ENCODE measurements at regions of chr13 and their contacts with region 1.

Region 1: GRCh38 chr13:30673669-30674521 is 56.2 kb downstream of the USPL1 start:
- DNase-seq: peak; percentile 42
- H3K4me3 ChIP-seq: peak overlapping the region; percentile 50 to 71 (median 62)
- H3K27ac ChIP-seq: peak overlapping the region; percentile 73 to 91 (median 80)
- H3K4me1 ChIP-seq: peaks cover 0 to 17% (median 3%) of the 10 kb centered on the region in 3 donors
- H3K27me3 ChIP-seq: no peaks in the 10 kb centered on the region
- CTCF ChIP-seq: peak; percentile 45 to 66 (median 62)
- POLR2A ChIP-seq: peak in 2 of 4 donors; percentile 7 to 32

Region 2: GRCh38 chr13:30465585-30466357 is 208.1 kb before region 1 on chr13 and contains the start of gene HMGB1:
- intact Hi-C with region 1: no loop called
- DNase-seq: peak; percentile 91
- H3K4me3 ChIP-seq: peak within 1 kb of the TSS; percentile 72 to 97 (median 94)
- H3K27ac ChIP-seq: peak within 1 kb of the TSS; percentile 97 to 100 (median 99)
- H3K4me1 ChIP-seq: peaks cover 9 to 37% (median 23%) of the 10 kb centered on the region in 3 donors
- H3K27me3 ChIP-seq: no peaks in the 10 kb centered on the region
- CTCF ChIP-seq: peak in 3 of 6 experiments; percentile 14 to 22 (median 15)
- POLR2A ChIP-seq: peak in 3 of 4 donors; percentile 99 to 100 (median 100)
- total RNA-seq, gene HMGB1: 189 to 446 (median 280) TPM

Region 3: DNA sequence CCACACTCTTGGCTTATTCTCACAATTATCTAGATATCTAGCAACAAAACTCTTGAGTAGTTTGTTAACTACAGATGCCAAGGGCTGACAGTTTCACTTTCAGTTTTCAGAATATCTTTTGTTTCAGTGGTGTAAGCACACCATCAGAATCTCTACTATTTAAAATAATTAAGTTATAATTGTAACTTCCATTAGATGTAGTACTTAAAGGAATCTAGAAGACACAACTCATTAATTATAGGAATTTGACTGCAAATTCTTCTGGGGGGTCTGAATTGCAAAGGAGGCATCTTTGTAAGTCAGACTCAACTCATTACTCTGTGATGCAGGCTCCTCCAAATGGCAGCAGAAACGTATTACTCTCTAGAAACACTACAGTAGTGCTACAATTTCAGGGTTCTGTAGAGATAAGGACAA is 101.0 kb before region 1 on chr13:
- intact Hi-C with region 1: no loop called
- DNase-seq: no peak
- H3K4me3 ChIP-seq: peak overlapping the region; percentile 6 to 61 (median 32)
- H3K27ac ChIP-seq: peak overlapping the region; percentile 59 to 74 (median 65)
- H3K4me1 ChIP-seq: peaks cover 0 to 53% (median 10%) of the 10 kb centered on the region in 3 donors
- H3K27me3 ChIP-seq: no peaks in the 10 kb centered on the region
- CTCF ChIP-seq: no peak
- POLR2A ChIP-seq: no peak

Region 4: GRCh38 chr13:30593001-30593400 is 80.9 kb before region 1 on chr13:
- intact Hi-C with region 1: no loop called
- DNase-seq: no peak
- H3K4me3 ChIP-seq: no peak overlapping the region
- H3K27ac ChIP-seq: no peak overlapping the region
- H3K4me1 ChIP-seq: no peaks in the 10 kb centered on the region
- H3K27me3 ChIP-seq: no peaks in the 10 kb centered on the region
- CTCF ChIP-seq: no peak
- POLR2A ChIP-seq: no peak

Region 5: GRCh38 chr13:30607908-30608307 is 66.0 kb before region 1 on chr13:
- intact Hi-C with region 1: no loop called
- DNase-seq: no peak
- H3K4me3 ChIP-seq: no peak overlapping the region
- H3K27ac ChIP-seq: no peak overlapping the region
- H3K4me1 ChIP-seq: peaks cover 0 to 10% (median 0%) of the 10 kb centered on the region in 3 donors
- H3K27me3 ChIP-seq: no peaks in the 10 kb centered on the region
- CTCF ChIP-seq: no peak
- POLR2A ChIP-seq: no peak

Region 6: GRCh38 chr13:30802953-30803478 is 129.1 kb after region 1 on chr13:
- intact Hi-C with region 1: loop called (anchors 10 kb)
- DNase-seq: peak; percentile 9
- H3K4me3 ChIP-seq: peak overlapping the region; percentile 29 to 63 (median 42)
- H3K27ac ChIP-seq: peak overlapping the region; percentile 47 to 64 (median 56)
- H3K4me1 ChIP-seq: peaks cover 10 to 36% (median 12%) of the 10 kb centered on the region in 3 donors
- H3K27me3 ChIP-seq: no peaks in the 10 kb centered on the region
- CTCF ChIP-seq: peak; percentile 81 to 98 (median 94)
- POLR2A ChIP-seq: no peak

Measured in esophagus squamous epithelium (tissue), 5 donors.